ENCODE measurements at regions of chr17 and their contacts with region 1.

Region 1: GRCh38 chr17:40098846-40099618 is 1.4 kb downstream of the NR1D1 start:
- DNase-seq: peak; percentile 98 to 100 (median 99)
- H3K4me3 ChIP-seq: peak overlapping the region; percentile 73 to 96
- H3K4me3 Mint-ChIP-seq: peak overlapping the region; percentile 80 to 99 (median 98)
- H3K27ac ChIP-seq: peak overlapping the region; percentile 92
- H3K27ac Mint-ChIP-seq: peak overlapping the region; percentile 86 to 99 (median 94)
- H3K4me1 ChIP-seq: peaks cover 90% of the 10 kb centered on the region
- H3K4me1 Mint-ChIP-seq: peaks cover 61 to 95% (median 79%) of the 10 kb centered on the region in 4 donors
- H3K27me3 ChIP-seq: no peaks in the 10 kb centered on the region
- H3K27me3 Mint-ChIP-seq: no peaks in the 10 kb centered on the region

Region 2: GRCh38 chr17:39401412-39402243 is 697.4 kb before region 1 on chr17 and contains the start of gene FBXL20:
- CTCF ChIA-PET with region 1: no interaction called
- POLR2A ChIA-PET with region 1: no interaction called
- intact Hi-C with region 1: no loop called
- DNase-seq: peak; percentile 90 to 95 (median 92)
- H3K4me3 ChIP-seq: peak within 1 kb of the TSS; percentile 87 to 89
- H3K4me3 Mint-ChIP-seq: peak within 1 kb of the TSS; percentile 93 to 99 (median 97)
- H3K27ac ChIP-seq: peak within 1 kb of the TSS; percentile 85
- H3K27ac Mint-ChIP-seq: peak within 1 kb of the TSS; percentile 97 to 99 (median 98)
- H3K4me1 ChIP-seq: peaks cover 17% of the 10 kb centered on the region
- H3K4me1 Mint-ChIP-seq: peaks cover 28 to 54% (median 41%) of the 10 kb centered on the region in 4 donors
- H3K27me3 ChIP-seq: no peaks in the 10 kb centered on the region
- H3K27me3 Mint-ChIP-seq: peaks cover 0 to 2% of the 10 kb centered on the region in 2 donors
- total RNA-seq, gene FBXL20: 35.3 to 38.5 TPM

Region 3: DNA sequence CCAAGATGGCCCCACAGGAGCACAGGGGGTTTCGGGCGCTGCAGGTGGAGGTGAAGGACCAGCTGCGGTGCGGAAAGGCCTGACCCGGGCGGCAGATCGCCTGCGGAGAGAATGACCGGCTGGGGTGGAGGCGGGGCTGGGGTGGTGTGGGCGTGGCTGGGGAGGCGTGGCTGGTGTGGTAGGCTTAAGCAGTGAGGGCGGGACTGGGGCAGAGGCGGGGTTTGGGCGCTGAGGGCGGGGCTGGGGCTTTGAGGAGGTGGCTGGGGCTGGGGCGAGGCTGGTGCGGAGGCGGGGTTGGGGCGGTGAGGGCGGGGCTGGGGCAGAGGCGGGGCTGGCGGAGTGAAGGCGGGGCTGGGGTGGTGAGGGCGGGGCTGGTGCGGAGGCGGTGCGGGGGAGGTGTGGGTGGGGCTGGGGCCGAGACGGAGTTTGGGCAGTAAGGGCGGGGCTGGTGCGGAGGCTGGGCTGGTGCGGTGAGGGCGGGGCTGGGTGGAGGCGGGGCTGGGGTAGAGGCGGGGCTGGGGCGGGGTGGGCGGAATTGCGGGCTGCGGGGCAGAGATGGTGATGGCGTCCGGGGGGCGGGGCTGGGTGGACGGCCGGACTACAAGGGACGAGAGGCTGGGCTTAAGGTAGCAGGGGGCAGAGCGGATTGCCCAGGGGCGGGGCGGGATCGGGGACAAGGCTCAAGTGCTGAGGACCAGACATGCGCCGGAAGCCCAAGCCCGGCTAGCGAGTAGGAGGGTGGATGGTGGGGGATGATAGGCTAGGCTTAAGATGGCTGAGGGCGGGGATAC is 146.2 kb before region 1 on chr17:
- CTCF ChIA-PET with region 1: no interaction called
- POLR2A ChIA-PET with region 1: no interaction called
- intact Hi-C with region 1: loop called (anchors 1 kb)
- DNase-seq: peak; percentile 90 to 99 (median 90)
- H3K4me3 ChIP-seq: peak overlapping the region; percentile 61 to 78
- H3K4me3 Mint-ChIP-seq: peak overlapping the region; percentile 79 to 90 (median 86)
- H3K27ac ChIP-seq: peak overlapping the region; percentile 34
- H3K27ac Mint-ChIP-seq: peak overlapping the region; percentile 71 to 94 (median 89)
- H3K4me1 ChIP-seq: peaks cover 12% of the 10 kb centered on the region
- H3K4me1 Mint-ChIP-seq: peaks cover 6 to 23% (median 9%) of the 10 kb centered on the region in 4 donors
- H3K27me3 ChIP-seq: no peaks in the 10 kb centered on the region
- H3K27me3 Mint-ChIP-seq: no peaks in the 10 kb centered on the region

Region 4: DNA sequence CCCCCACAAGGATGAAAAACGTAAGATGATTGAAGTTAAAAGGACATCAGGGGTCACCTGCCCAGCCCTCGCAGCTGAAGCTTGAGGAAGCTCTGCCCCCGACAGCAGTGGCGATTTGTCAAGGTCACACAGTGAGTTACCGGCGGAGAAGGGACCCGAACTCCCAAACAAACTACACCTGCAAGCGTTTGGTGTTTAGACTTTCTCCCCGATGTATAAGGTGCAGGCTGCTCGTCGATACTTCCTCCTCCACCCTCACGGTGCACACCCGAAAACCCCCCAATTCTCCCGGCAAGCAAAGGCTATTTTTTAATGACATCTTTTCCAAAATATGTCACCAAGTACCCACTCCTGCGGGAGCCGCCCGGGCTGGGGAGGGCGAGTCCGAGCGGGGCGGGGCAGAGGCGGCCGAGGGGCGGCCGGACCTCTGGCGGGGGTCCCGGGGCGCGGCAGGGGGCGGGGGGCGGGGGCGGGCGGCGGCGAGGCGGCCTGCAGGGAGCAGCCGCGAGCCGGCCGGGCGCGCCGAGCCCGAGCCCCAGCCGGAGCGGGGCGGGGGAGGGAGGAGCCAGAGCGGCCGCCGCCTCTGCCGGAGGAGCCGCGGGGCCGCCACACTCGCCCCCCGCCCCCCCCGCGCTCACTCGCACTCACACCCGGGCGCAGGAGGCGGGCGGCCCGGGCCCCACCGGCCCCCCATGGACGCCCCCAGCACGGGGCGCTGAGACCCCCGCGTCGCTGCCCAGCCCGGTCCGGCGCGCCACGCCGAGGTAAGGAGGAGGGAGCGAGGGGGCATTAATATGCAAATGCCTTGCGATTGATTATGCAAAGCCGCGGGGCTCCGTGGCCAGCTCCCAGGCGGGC is 36.5 kb before region 1 on chr17 and contains the start of gene THRA:
- CTCF ChIA-PET with region 1: interaction called, 543 read pairs
- POLR2A ChIA-PET with region 1: interaction called, 304 read pairs
- intact Hi-C with region 1: no loop called
- DNase-seq: peak; percentile 71 to 75 (median 73)
- H3K4me3 ChIP-seq: peak within 1 kb of the TSS; percentile 57 to 70
- H3K4me3 Mint-ChIP-seq: peak within 1 kb of the TSS; percentile 90 to 96 (median 94)
- H3K27ac ChIP-seq: peak within 1 kb of the TSS; percentile 70
- H3K27ac Mint-ChIP-seq: peak within 1 kb of the TSS; percentile 81 to 96 (median 91)
- H3K4me1 ChIP-seq: peaks cover 49% of the 10 kb centered on the region
- H3K4me1 Mint-ChIP-seq: peaks cover 33 to 53% (median 42%) of the 10 kb centered on the region in 4 donors
- H3K27me3 ChIP-seq: peaks cover 3% of the 10 kb centered on the region
- H3K27me3 Mint-ChIP-seq: peaks cover 1% of the 10 kb centered on the region in 2 donors
- total RNA-seq, gene THRA: 35.9 to 41.3 TPM

Region 5: GRCh38 chr17:40086150-40087044 is 12.6 kb before region 1 on chr17:
- CTCF ChIA-PET with region 1: interaction called, 543 read pairs
- POLR2A ChIA-PET with region 1: interaction called, 10 read pairs
- intact Hi-C with region 1: no loop called
- DNase-seq: peak in 3 of 5 donors; percentile 40 to 52 (median 50)
- H3K4me3 ChIP-seq: no peak overlapping the region
- H3K4me3 Mint-ChIP-seq: no peak overlapping the region
- H3K27ac ChIP-seq: no peak overlapping the region
- H3K27ac Mint-ChIP-seq: peak overlapping the region in 4 of 7 donors; percentile 1 to 77 (median 60)
- H3K4me1 ChIP-seq: peaks cover 5% of the 10 kb centered on the region
- H3K4me1 Mint-ChIP-seq: peaks cover 6 to 23% (median 10%) of the 10 kb centered on the region in 4 donors
- H3K27me3 ChIP-seq: no peaks in the 10 kb centered on the region
- H3K27me3 Mint-ChIP-seq: no peaks in the 10 kb centered on the region

Region 6: GRCh38 chr17:40121181-40122135 is 22.4 kb after region 1 on chr17 and contains the start of gene MSL1:
- CTCF ChIA-PET with region 1: interaction called, 7 read pairs
- POLR2A ChIA-PET with region 1: interaction called, 494 read pairs
- intact Hi-C with region 1: loop called (anchors 1 kb)
- DNase-seq: peak; percentile 82 to 91 (median 85)
- H3K4me3 ChIP-seq: peak within 1 kb of the TSS; percentile 86 to 98
- H3K4me3 Mint-ChIP-seq: peak within 1 kb of the TSS; percentile 76 to 96 (median 84)
- H3K27ac ChIP-seq: peak within 1 kb of the TSS; percentile 78
- H3K27ac Mint-ChIP-seq: peak within 1 kb of the TSS; percentile 78 to 92 (median 83)
- H3K4me1 ChIP-seq: peaks cover 35% of the 10 kb centered on the region
- H3K4me1 Mint-ChIP-seq: peaks cover 17 to 47% (median 31%) of the 10 kb centered on the region in 4 donors
- H3K27me3 ChIP-seq: no peaks in the 10 kb centered on the region
- H3K27me3 Mint-ChIP-seq: no peaks in the 10 kb centered on the region
- total RNA-seq, gene MSL1: 130 to 133 TPM

Region 7: GRCh38 chr17:40139566-40140058 is 40.6 kb after region 1 on chr17:
- CTCF ChIA-PET with region 1: interaction called, 5 read pairs
- POLR2A ChIA-PET with region 1: interaction called, 70 read pairs
- intact Hi-C with region 1: loop called (anchors 1 kb)
- DNase-seq: no peak
- H3K4me3 ChIP-seq: peak overlapping the region; percentile 25 to 62
- H3K4me3 Mint-ChIP-seq: peak overlapping the region; percentile 91 to 98 (median 96)
- H3K27ac ChIP-seq: peak overlapping the region; percentile 97
- H3K27ac Mint-ChIP-seq: peak overlapping the region; percentile 98 to 100 (median 99)
- H3K4me1 ChIP-seq: peaks cover 28% of the 10 kb centered on the region
- H3K4me1 Mint-ChIP-seq: peaks cover 23 to 49% (median 31%) of the 10 kb centered on the region in 4 donors
- H3K27me3 ChIP-seq: no peaks in the 10 kb centered on the region
- H3K27me3 Mint-ChIP-seq: no peaks in the 10 kb centered on the region

Region 8: GRCh38 chr17:40219073-40219860 is 120.2 kb after region 1 on chr17 and contains the start of gene WIPF2:
- CTCF ChIA-PET with region 1: no interaction called
- POLR2A ChIA-PET with region 1: interaction called, 15 read pairs
- intact Hi-C with region 1: no loop called
- DNase-seq: peak; percentile 94 to 97 (median 95)
- H3K4me3 ChIP-seq: peak within 1 kb of the TSS; percentile 59 to 71
- H3K4me3 Mint-ChIP-seq: peak within 1 kb of the TSS; percentile 92 to 100 (median 98)
- H3K27ac ChIP-seq: peak within 1 kb of the TSS; percentile 96
- H3K27ac Mint-ChIP-seq: peak within 1 kb of the TSS; percentile 93 to 100 (median 100)
- H3K4me1 ChIP-seq: peaks cover 26% of the 10 kb centered on the region
- H3K4me1 Mint-ChIP-seq: peaks cover 23 to 49% (median 33%) of the 10 kb centered on the region in 4 donors
- H3K27me3 ChIP-seq: no peaks in the 10 kb centered on the region
- H3K27me3 Mint-ChIP-seq: no peaks in the 10 kb centered on the region
- total RNA-seq, gene WIPF2: 34.4 to 34.7 TPM